ENCODE measurements at regions of chr19 and their contacts with region 1.

Region 1: GRCh38 chr19:45038931-45039893 is at the start of gene CLASRP:
- DNase-seq: peak; percentile 91
- H3K4me3 Mint-ChIP-seq: peak within 1 kb of the TSS; percentile 81
- H3K27ac Mint-ChIP-seq: peak within 1 kb of the TSS; percentile 93
- H3K4me1 Mint-ChIP-seq: peaks cover 32% of the 10 kb centered on the region
- H3K27me3 Mint-ChIP-seq: no peaks in the 10 kb centered on the region
- total RNA-seq, gene CLASRP: 84.3 to 88.0 TPM

Region 2: GRCh38 chr19:44972802-44973201 is 66.4 kb before region 1 on chr19:
- CTCF ChIA-PET with region 1: no interaction called
- POLR2A ChIA-PET with region 1: no interaction called
- DNase-seq: no peak
- H3K4me3 Mint-ChIP-seq: no peak overlapping the region
- H3K27ac Mint-ChIP-seq: no peak overlapping the region
- H3K4me1 Mint-ChIP-seq: peaks cover 2% of the 10 kb centered on the region
- H3K27me3 Mint-ChIP-seq: no peaks in the 10 kb centered on the region

Region 3: GRCh38 chr19:45001087-45001739 is 38.0 kb before region 1 on chr19 and contains the start of gene RELB:
- CTCF ChIA-PET with region 1: no interaction called
- POLR2A ChIA-PET with region 1: interaction called, 38 read pairs
- DNase-seq: peak; percentile 95
- H3K4me3 Mint-ChIP-seq: peak within 1 kb of the TSS; percentile 95
- H3K27ac Mint-ChIP-seq: peak within 1 kb of the TSS; percentile 99
- H3K4me1 Mint-ChIP-seq: peaks cover 26% of the 10 kb centered on the region
- H3K27me3 Mint-ChIP-seq: no peaks in the 10 kb centered on the region
- total RNA-seq, gene RELB: 32.6 to 33.5 TPM

Region 4: DNA sequence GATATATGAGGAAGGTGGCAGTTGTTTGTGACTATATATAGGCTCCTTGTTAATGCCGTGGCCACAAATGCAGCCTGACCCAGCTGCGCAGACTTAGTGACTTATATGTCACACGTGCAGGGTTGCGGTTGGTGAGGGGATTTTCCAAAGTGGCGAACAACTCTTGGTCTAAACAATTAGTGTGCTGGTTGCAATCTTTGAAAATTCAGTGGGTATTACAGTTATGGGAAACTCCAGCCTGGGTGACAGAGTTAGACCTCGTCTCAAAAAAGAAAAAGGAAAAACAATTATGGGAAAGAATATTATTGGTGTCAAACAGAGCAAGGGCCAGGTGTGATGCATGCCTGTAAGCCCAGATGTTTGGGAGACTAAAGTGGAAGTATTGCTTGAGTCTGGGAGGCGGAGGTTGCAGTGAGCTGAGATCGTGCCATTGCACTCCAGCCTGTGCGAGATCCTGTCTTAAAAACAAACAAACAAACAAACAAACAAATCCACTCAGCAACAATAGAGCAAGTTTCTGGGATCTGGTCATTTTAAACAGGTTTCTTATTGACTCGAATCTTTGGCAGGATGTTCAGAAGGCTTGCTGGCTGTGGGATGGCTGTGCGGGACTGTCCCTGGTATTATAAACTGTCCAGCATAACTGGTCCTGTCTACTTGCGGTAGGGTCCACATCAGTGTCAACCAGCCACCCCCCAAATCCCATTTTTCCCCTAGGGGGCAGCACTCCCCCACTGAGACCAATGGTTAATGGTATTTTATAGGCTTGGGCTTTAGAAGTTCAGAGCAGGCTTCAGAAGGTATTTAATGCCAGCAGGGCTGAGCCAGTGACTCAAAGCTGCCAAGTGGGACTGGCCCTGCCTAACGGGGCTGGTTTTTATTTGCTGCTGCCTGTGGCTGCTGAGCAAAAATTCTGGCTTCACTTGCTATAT is 22.6 kb before region 1 on chr19:
- CTCF ChIA-PET with region 1: interaction called, 4 read pairs
- POLR2A ChIA-PET with region 1: interaction called, 13 read pairs
- DNase-seq: peak; percentile 83
- H3K4me3 Mint-ChIP-seq: peak overlapping the region; percentile 35
- H3K27ac Mint-ChIP-seq: peak overlapping the region; percentile 84
- H3K4me1 Mint-ChIP-seq: peaks cover 14% of the 10 kb centered on the region
- H3K27me3 Mint-ChIP-seq: no peaks in the 10 kb centered on the region

Region 5: GRCh38 chr19:45027371-45027770 is 11.8 kb before region 1 on chr19:
- CTCF ChIA-PET with region 1: no interaction called
- POLR2A ChIA-PET with region 1: interaction called, 19 read pairs
- DNase-seq: no peak
- H3K4me3 Mint-ChIP-seq: no peak overlapping the region
- H3K27ac Mint-ChIP-seq: no peak overlapping the region
- H3K4me1 Mint-ChIP-seq: no peaks in the 10 kb centered on the region
- H3K27me3 Mint-ChIP-seq: no peaks in the 10 kb centered on the region

Region 6: DNA sequence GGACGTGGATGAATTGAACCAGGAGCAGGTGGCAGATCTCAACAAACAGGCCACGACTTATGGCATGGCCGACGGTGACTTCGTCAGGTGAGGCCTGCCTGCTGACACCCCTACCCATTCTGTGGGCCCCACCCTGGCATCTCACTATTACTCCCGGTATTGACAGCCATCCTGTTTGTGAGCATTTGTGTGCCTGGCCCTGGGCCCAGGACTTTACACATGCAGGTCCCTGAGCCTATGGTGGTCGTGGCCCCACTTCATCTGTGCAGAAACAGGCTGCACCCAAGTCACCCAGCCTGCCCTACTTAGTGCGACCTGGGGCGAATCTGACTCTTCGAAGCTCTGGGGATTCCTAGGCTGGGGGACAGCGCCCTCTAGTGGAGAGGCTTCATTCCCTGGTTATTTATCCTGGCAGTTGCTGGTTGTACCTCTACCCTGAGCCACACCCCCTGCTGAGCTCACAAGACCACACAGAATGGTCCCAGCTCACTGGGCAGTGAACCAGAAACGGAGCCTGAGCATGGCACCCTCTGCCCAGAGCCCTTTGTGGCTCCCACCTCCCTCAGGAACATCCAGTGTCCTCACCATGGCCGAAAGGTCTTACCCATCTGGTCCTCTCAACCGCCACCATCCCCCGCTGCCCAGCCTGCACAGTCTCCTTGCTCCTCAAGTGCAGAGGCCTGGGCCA is 20.2 kb after region 1 on chr19:
- CTCF ChIA-PET with region 1: interaction called, 35 read pairs
- POLR2A ChIA-PET with region 1: interaction called, 6 read pairs
- DNase-seq: peak; percentile 85
- H3K4me3 Mint-ChIP-seq: no peak overlapping the region
- H3K27ac Mint-ChIP-seq: peak overlapping the region; percentile 53
- H3K4me1 Mint-ChIP-seq: peaks cover 2% of the 10 kb centered on the region
- H3K27me3 Mint-ChIP-seq: no peaks in the 10 kb centered on the region

Region 7: GRCh38 chr19:45079063-45079910 is 40.1 kb after region 1 on chr19 and contains the start of gene GEMIN7:
- CTCF ChIA-PET with region 1: no interaction called
- POLR2A ChIA-PET with region 1: interaction called, 13 read pairs
- DNase-seq: peak; percentile 83
- H3K4me3 Mint-ChIP-seq: peak within 1 kb of the TSS; percentile 96
- H3K27ac Mint-ChIP-seq: peak within 1 kb of the TSS; percentile 83
- H3K4me1 Mint-ChIP-seq: peaks cover 56% of the 10 kb centered on the region
- H3K27me3 Mint-ChIP-seq: no peaks in the 10 kb centered on the region
- total RNA-seq, gene GEMIN7: 31.7 to 35.5 TPM

Measured in activated CD4-positive, alpha-beta memory T cell treated with anti-CD3 and anti-CD28 coated beads, Interleukin-2, amount 10 ng/mL, durations not matched to agents 7 days and 5 days (primary cell).